ENCODE measurements at regions of chr2 and their contacts with region 1.

Region 1: DNA sequence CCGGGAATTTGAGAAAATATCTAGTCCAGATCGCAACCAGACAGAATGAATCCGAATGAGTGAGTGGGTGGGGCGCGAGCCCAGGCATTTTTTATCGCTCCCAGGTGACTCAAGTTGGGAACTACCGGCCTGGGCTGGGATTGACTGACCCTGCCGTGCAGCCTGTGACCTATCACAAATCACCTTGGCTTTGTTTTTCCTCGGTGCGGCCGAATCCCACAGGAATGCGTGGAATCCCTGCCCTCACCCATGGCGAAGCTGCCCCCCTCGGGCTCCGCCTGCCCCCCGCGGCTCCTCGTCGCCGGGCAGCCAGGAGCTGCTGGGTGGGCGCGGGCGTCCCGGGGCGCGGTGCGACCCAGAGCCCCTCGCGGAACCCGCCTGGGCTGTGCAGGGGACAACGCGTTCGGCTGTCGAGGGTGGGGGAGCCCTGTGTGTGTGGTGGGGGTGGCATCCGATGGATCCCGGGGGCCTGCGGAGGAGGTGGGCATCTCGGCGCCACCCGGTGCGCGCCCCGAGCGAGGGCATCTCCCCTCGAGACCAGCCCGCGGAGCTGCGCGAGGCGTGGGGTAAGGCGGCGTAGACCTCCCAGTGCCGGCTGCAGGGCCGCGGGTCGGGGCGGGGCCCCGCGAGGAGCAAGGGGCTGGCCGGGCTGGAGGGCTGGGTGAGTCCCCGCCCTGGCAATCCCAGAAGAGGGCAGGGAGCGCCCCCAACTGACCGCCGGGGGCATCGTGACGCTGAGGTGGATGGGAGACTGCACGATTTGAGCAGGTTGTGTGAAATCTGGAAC is 16.5 kb downstream of the B3GNT7 start:
- DNase-seq: peak; percentile 28 to 85 (median 74)
- ATAC-seq: peak; percentile 97
- H3K4me3 ChIP-seq: peak overlapping the region in 1 of 2 experiments; percentile 50
- H3K4me3 Mint-ChIP-seq: peak overlapping the region; percentile 60
- H3K27ac ChIP-seq: no peak overlapping the region
- H3K27ac Mint-ChIP-seq: no peak overlapping the region
- H3K4me1 ChIP-seq: peaks cover 5% of the 10 kb centered on the region
- H3K4me1 Mint-ChIP-seq: peaks cover 6% of the 10 kb centered on the region
- H3K27me3 ChIP-seq: peaks cover 0 to 11% of the 10 kb centered on the region in 2 experiments
- H3K27me3 Mint-ChIP-seq: peaks cover 34% of the 10 kb centered on the region
- CTCF ChIP-seq: peak; percentile 44

Region 2: GRCh38 chr2:231104115-231104713 is 307.8 kb before region 1 on chr2:
- CTCF ChIA-PET with region 1: interaction called, 5 read pairs
- POLR2A ChIA-PET with region 1: no interaction called
- intact Hi-C with region 1: loop called (anchors 2 kb)
- DNase-seq: peak; percentile 10 to 67 (median 51)
- ATAC-seq: peak; percentile 92
- H3K4me3 ChIP-seq: no peak overlapping the region
- H3K4me3 Mint-ChIP-seq: no peak overlapping the region
- H3K27ac ChIP-seq: no peak overlapping the region
- H3K27ac Mint-ChIP-seq: no peak overlapping the region
- H3K4me1 ChIP-seq: no peaks in the 10 kb centered on the region
- H3K4me1 Mint-ChIP-seq: no peaks in the 10 kb centered on the region
- H3K27me3 ChIP-seq: no peaks in the 10 kb centered on the region
- H3K27me3 Mint-ChIP-seq: no peaks in the 10 kb centered on the region
- CTCF ChIP-seq: peak; percentile 73

Region 3: GRCh38 chr2:231227309-231228162 is 184.5 kb before region 1 on chr2:
- CTCF ChIA-PET with region 1: interaction called, 8 read pairs
- POLR2A ChIA-PET with region 1: no interaction called
- intact Hi-C with region 1: loop called (anchors 1 to 2 kb)
- DNase-seq: peak in 8 of 9 experiments; percentile 10 to 73 (median 37)
- ATAC-seq: peak; percentile 89
- H3K4me3 ChIP-seq: no peak overlapping the region
- H3K4me3 Mint-ChIP-seq: no peak overlapping the region
- H3K27ac ChIP-seq: no peak overlapping the region
- H3K27ac Mint-ChIP-seq: no peak overlapping the region
- H3K4me1 ChIP-seq: no peaks in the 10 kb centered on the region
- H3K4me1 Mint-ChIP-seq: no peaks in the 10 kb centered on the region
- H3K27me3 ChIP-seq: no peaks in the 10 kb centered on the region
- H3K27me3 Mint-ChIP-seq: no peaks in the 10 kb centered on the region
- CTCF ChIP-seq: peak; percentile 64

Region 4: DNA sequence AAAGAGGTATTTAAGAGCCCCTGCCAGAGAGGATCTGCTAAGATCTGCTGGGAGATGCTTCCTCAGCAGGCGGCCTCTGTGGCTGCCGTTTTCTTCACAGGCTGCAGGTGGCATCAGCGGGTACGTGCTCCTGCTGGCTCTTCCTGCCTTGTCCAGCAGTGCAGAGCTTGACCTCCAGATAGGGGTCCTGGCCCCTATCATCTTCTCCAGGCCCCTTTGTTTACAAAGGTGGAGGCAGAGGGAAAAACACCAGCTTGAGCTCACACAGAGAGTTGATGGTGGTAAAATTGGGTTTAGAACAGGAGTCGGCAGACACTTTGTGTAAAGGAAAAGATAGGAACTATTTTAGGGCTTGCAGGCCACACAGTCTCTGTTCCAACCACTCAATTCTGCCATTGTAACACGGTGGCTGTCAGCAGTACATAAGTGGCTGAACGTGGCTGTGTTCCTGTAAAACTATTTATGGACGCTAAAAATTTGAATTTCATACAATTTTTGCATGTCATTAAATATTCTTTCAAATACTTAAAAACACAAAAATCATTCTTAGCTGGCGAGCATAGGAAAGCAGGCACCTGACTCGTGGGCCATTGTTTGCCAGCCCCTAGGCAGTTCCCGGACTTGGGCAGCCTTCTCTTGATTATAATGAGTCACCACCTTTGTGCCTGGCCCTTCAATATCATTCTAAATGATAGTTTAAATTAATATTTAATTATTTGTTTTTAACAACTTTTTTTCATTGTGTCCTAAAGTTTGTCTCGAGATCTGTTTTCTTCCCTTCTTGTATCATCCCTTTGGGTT is 114.7 kb before region 1 on chr2:
- CTCF ChIA-PET with region 1: interaction called, 3 read pairs
- POLR2A ChIA-PET with region 1: no interaction called
- intact Hi-C with region 1: loop called (anchors 1 to 10 kb)
- DNase-seq: peak in 4 of 9 experiments; percentile 14 to 49 (median 30)
- ATAC-seq: no peak
- H3K4me3 ChIP-seq: no peak overlapping the region
- H3K4me3 Mint-ChIP-seq: no peak overlapping the region
- H3K27ac ChIP-seq: no peak overlapping the region
- H3K27ac Mint-ChIP-seq: no peak overlapping the region
- H3K4me1 ChIP-seq: no peaks in the 10 kb centered on the region
- H3K4me1 Mint-ChIP-seq: peaks cover 2% of the 10 kb centered on the region
- H3K27me3 ChIP-seq: no peaks in the 10 kb centered on the region
- H3K27me3 Mint-ChIP-seq: no peaks in the 10 kb centered on the region
- CTCF ChIP-seq: no peak

Region 5: DNA sequence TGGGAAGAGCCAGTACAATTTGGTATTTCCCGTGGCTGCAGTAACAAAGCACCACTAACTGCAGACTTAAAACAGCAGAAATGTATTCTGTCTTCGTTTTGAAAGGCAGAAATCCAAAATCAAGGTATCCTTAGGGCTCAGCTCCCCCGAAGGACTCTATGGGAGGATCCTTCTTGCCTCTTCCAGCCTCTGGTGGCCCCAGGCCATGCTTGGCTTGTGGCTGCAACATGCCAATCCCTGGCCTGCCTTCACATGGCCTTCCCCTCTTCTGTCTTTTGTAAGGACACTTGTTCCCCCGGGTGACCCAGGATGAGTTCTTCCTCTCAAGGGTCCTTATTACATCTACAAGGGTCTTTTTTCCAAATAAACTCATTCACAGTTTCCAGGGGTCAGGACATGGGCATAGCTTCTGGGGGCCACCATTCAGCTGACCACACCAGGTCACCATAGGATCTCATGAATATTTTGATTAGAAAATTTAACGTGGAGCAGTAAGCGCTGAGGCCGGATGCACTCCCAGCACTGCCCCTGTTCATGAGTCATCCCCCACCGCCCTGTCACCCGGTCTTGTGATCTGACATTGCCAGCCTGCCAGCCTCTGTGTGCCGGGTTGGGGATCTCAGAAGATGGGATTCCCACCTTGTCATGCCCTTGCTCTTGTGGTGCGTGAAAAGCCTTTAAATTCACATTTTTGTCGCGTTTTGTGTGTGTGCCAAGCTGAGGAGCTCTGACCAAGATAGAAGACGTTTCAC is 77.7 kb before region 1 on chr2:
- CTCF ChIA-PET with region 1: no interaction called
- POLR2A ChIA-PET with region 1: no interaction called
- intact Hi-C with region 1: no loop called
- DNase-seq: no peak
- ATAC-seq: no peak
- H3K4me3 ChIP-seq: no peak overlapping the region
- H3K4me3 Mint-ChIP-seq: no peak overlapping the region
- H3K27ac ChIP-seq: no peak overlapping the region
- H3K27ac Mint-ChIP-seq: no peak overlapping the region
- H3K4me1 ChIP-seq: no peaks in the 10 kb centered on the region
- H3K4me1 Mint-ChIP-seq: no peaks in the 10 kb centered on the region
- H3K27me3 ChIP-seq: no peaks in the 10 kb centered on the region
- H3K27me3 Mint-ChIP-seq: no peaks in the 10 kb centered on the region
- CTCF ChIP-seq: no peak

Measured in CD8-positive, alpha-beta T cell (primary cell).